ENCODE measurements at regions of chr1 and their contacts with region 1.

Region 1: GRCh38 chr1:13725714-13726175 is 25.8 kb downstream of the PRDM2 start:
- DNase-seq: peak; percentile 70
- ATAC-seq: peak; percentile 54
- H3K4me3 Mint-ChIP-seq: no peak overlapping the region
- H3K27ac Mint-ChIP-seq: peak overlapping the region; percentile 31
- H3K4me1 Mint-ChIP-seq: peaks cover 36% of the 10 kb centered on the region
- H3K27me3 Mint-ChIP-seq: no peaks in the 10 kb centered on the region

Region 2: DNA sequence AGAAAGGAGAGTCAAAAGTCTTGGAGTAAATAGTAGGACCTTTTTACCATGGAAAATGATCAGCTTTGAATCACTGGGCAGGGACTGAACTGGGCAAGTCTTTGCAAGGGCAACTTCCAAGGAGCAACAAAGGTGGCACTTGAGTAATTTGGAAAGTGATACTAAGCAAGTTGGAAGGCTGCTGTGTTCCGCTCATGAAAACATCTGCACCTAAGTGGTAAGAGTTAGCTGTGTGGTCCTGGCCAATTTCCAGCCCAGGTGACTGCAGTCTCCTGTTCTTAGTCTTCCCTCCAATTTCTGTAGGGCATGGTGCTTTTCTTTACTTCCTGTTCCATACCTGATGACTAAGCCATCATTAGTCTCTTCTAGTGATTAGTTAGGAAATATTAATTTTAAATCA is 61.3 kb before region 1 on chr1:
- CTCF ChIA-PET with region 1: interaction called, 27 read pairs
- DNase-seq: no peak
- ATAC-seq: peak; percentile 16
- H3K4me3 Mint-ChIP-seq: no peak overlapping the region
- H3K27ac Mint-ChIP-seq: no peak overlapping the region
- H3K4me1 Mint-ChIP-seq: peaks cover 13% of the 10 kb centered on the region
- H3K27me3 Mint-ChIP-seq: peaks cover 6% of the 10 kb centered on the region

Region 3: DNA sequence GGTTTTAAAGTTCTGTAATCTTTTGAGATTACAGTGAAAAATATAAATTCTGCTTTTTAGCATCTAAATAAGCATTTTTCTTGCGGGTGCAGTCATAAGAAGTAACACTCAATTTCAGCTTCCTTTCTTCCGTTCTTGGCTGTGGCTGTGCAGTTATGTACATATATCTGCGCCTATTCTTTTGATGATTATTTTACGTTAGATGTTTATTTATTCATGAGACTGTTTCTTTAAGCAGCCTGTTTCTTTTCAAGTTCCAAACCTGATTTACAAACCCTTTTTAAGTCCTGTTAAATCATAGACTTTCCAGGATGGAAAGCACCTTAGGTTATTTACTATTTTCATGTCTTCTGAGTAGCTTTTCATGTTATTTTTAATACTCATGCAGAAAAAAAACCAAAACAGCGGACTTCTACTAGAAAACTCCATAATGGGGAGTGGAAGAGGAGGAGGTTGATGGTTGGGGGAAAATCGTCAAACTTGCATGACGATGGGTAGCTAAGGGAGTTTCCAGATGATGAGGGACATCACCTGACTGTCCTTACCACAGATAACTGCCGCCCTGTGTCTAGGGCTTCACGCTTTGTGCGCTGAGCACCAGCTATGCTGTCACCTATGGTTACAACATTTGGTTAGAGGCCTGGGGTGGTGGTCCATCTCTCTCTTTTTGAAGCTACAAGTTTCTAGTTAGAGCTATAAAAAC is 23.2 kb before region 1 on chr1:
- CTCF ChIA-PET with region 1: interaction called, 15 read pairs
- DNase-seq: peak; percentile 88
- ATAC-seq: peak; percentile 79
- H3K4me3 Mint-ChIP-seq: peak overlapping the region; percentile 96
- H3K27ac Mint-ChIP-seq: peak overlapping the region; percentile 97
- H3K4me1 Mint-ChIP-seq: peaks cover 48% of the 10 kb centered on the region
- H3K27me3 Mint-ChIP-seq: no peaks in the 10 kb centered on the region

Measured in activated CD8-positive, alpha-beta memory T cell treated with anti-CD3 and anti-CD28 coated beads, Interleukin-2, amount 10 ng/mL, durations not matched to agents 7 days and 5 days (primary cell).